Right cardiac atrium (tissue), 5 donors: ENCODE measurements at regions of chr1 and their contacts with region 1.

Region 1: GRCh38 chr1:94237291-94238226 is at the start of gene ARHGAP29:
- DNase-seq: peak; percentile 88 to 94 (median 93)
- ATAC-seq: peak; percentile 97
- H3K4me3 ChIP-seq: peak within 1 kb of the TSS; percentile 68
- H3K27ac ChIP-seq: peak within 1 kb of the TSS; percentile 93
- H3K4me1 ChIP-seq: peaks cover 2% of the 10 kb centered on the region
- H3K27me3 ChIP-seq: no peaks in the 10 kb centered on the region
- total RNA-seq, gene ARHGAP29: 22.1 to 31.1 (median 30.3) TPM

Region 2: DNA sequence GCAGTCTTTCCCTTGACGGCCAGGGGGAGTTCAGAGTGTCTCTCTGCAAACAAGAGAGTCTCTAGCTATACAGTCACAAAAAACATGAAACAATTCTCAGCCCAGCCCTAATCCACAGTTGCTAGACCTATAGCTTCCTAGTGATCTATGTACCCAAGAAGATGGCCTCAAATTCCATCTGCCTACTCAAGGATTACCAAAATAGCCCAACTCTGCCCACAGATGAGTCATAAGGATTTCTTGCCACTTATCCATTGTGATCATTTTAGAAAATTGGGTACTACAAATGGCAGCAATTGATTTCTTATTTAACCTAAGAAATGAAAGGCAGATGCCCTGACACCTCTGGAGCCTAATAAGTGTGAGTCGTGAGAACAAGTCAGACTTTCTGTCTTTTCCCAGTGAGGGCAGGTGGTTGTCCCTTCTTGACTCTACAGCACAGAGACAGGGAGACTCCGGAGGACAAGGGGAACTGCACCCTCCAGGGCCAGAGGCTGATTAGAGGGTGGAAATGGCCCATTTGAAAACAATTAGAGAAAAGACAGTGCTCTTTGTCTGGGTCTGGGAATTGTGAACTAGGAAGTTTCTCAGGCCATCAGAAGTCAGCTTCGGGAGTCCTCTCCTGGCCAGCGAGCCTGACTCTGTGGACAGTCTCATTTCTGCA is 182.0 kb before region 1 on chr1:
- intact Hi-C with region 1: loop called (anchors 5 to 10 kb)
- DNase-seq: no peak
- ATAC-seq: no peak
- H3K4me3 ChIP-seq: no peak overlapping the region
- H3K27ac ChIP-seq: no peak overlapping the region
- H3K4me1 ChIP-seq: peaks cover 3% of the 10 kb centered on the region
- H3K27me3 ChIP-seq: no peaks in the 10 kb centered on the region